ENCODE measurements at regions of chr2 and their contacts with region 1.

Region 1: GRCh38 chr2:3470166-3470651 is 49.1 kb downstream of the ADI1 start:
- DNase-seq: peak; percentile 77 to 94 (median 90)
- ATAC-seq: peak; percentile 83 to 85 (median 84)
- H3K4me3 ChIP-seq: no peak overlapping the region
- H3K27ac ChIP-seq: peak overlapping the region; percentile 76 to 95 (median 84)
- H3K4me1 ChIP-seq: peaks cover 9 to 66% (median 43%) of the 10 kb centered on the region in 12 donors
- H3K27me3 ChIP-seq: no peaks in the 10 kb centered on the region
- CTCF ChIP-seq: no peak
- POLR2A ChIP-seq: peak in 1 of 2 donors; percentile 31

Region 2: DNA sequence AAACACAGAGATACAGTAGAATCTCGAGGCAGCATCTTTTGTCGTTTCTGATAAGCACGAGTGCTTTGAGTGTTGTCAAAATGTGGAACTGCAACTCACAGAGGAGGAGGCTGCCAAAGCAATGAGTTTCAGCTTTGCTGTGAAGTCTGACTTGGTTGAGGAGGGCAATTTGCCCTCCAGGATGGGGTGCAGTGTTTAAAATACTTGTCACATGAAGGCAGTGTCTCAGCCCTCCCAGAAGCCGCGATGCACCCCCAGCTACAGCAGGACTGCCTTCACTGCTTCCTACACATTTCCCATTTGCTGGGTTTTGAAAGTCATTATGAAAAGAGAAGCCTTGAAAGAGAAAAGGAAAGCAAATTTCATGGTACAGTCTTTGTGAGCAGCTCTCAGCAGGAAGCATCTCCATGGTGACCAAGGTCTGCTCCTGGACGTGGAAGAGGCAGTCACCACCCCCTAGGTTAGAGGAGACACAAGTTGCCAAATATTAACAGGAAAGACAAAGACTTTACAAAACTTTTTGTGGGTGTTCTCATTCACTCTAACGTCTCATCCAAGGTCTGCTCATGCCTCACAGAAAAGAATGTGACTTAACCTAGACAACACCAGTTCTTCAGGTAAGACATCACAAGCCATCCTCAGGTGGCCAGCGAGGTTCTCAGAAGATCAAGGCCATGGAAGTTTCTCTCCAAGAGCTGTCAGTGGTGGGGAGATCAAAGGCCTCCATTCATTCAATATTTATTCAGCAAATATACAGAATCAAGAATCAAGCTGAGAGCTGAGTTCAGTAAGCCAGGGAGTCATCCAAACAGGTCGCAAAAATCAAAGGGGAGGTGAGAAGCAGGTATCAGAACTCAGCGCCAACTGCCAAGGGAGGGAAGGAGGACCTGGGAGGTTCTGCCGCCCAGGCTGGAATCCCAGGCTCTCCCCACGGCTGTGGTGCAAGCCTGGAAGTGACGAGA is 568.5 kb before region 1 on chr2:
- intact Hi-C with region 1: no loop called
- DNase-seq: no peak
- ATAC-seq: no peak
- H3K4me3 ChIP-seq: no peak overlapping the region
- H3K27ac ChIP-seq: no peak overlapping the region
- H3K4me1 ChIP-seq: no peaks in the 10 kb centered on the region
- H3K27me3 ChIP-seq: no peaks in the 10 kb centered on the region
- CTCF ChIP-seq: no peak
- POLR2A ChIP-seq: no peak

Region 3: GRCh38 chr2:3423492-3424175 is 46.6 kb before region 1 on chr2:
- intact Hi-C with region 1: no loop called
- DNase-seq: peak; percentile 47 to 83 (median 68)
- ATAC-seq: peak in 3 of 4 donors; percentile 51 to 65 (median 57)
- H3K4me3 ChIP-seq: no peak overlapping the region
- H3K27ac ChIP-seq: no peak overlapping the region
- H3K4me1 ChIP-seq: peaks cover 0 to 11% (median 0%) of the 10 kb centered on the region in 12 donors
- H3K27me3 ChIP-seq: no peaks in the 10 kb centered on the region
- CTCF ChIP-seq: peak; percentile 91 to 99 (median 98)
- POLR2A ChIP-seq: no peak

Region 4: DNA sequence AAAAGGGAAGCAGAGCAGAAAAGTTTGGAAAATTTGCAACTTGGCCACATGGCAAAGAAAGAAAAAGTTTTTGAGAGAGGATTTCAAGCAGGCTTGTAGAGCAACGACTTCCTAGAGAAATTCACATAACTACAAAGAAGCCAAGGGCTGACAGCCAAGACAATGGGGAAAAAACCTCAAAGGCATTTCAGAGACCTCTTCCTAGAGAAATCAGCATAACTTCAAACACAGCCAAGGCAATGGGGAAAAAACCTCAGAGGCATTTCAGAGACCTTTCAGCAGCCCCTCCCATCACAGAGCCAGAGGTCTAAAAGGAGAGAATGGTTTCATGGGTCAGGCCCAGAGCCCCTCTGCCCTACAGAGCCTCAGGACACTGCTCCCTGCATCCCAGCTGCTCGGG is 41.9 kb after region 1 on chr2:
- intact Hi-C with region 1: loop called in 1 of 10 experiments (anchors 5 kb)
- DNase-seq: no peak
- ATAC-seq: no peak
- H3K4me3 ChIP-seq: no peak overlapping the region
- H3K27ac ChIP-seq: no peak overlapping the region
- H3K4me1 ChIP-seq: peaks cover 0 to 4% (median 0%) of the 10 kb centered on the region in 12 donors
- H3K27me3 ChIP-seq: no peaks in the 10 kb centered on the region
- CTCF ChIP-seq: no peak
- POLR2A ChIP-seq: no peak

Region 5: GRCh38 chr2:3518496-3519254 is 48.5 kb after region 1 on chr2:
- intact Hi-C with region 1: loop called in 3 of 10 experiments (anchors 2 to 5 kb)
- DNase-seq: peak; percentile 99 to 100 (median 99)
- ATAC-seq: peak; percentile 90 to 96 (median 96)
- H3K4me3 ChIP-seq: peak overlapping the region; percentile 74 to 99 (median 90)
- H3K27ac ChIP-seq: peak overlapping the region; percentile 97 to 100 (median 99)
- H3K4me1 ChIP-seq: peaks cover 0 to 55% (median 37%) of the 10 kb centered on the region in 12 donors
- H3K27me3 ChIP-seq: no peaks in the 10 kb centered on the region
- CTCF ChIP-seq: no peak
- POLR2A ChIP-seq: peak; percentile 52 to 66